Cardiac septum (tissue), 1 donor: ENCODE measurements at regions of chr10 and their contacts with region 1.

Region 1: GRCh38 chr10:119859420-119860258 is 13.0 kb downstream of the MCMBP start:
- DNase-seq: no peak

Region 2: DNA sequence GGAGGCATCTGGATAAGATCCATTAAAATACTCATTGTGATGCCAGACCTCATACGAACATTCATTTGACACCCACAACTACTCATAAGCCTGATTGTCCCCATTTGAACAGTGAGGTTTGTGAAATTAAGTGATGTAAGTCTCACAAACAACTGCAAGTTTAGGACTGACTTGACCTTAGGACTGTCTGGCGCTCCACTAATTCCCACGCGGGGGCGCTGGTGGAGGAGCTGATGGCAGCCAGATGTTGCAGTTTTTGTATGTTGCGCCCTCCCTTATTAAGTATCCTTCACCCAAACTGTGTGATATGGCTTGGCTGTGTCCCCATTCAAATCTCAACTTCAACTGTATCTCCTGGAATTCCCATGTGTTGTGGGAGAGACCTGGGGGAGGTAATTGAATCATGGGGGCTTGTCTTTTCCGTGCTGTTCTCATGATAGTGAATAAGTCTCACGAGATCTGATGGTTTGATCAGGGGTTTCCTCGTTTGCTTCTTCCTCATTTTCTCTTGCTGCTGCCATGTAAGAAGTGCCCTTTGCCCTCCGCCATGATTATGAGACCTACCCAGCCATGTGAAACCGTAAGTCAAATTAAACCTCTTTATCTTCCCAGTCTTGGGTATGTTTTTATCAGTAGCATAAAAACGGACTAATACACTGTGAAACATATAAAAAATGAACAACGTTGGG is 242.6 kb before region 1 on chr10:
- intact Hi-C with region 1: loop called (anchors 5 kb)
- DNase-seq: no peak

Region 3: GRCh38 chr10:119750391-119751230 is 109.0 kb before region 1 on chr10:
- intact Hi-C with region 1: loop called (anchors 5 kb)
- DNase-seq: peak; percentile 81